Colonic mucosa (tissue), 4 donors: ENCODE measurements at regions of chr19 and their contacts with region 1.

Region 1: DNA sequence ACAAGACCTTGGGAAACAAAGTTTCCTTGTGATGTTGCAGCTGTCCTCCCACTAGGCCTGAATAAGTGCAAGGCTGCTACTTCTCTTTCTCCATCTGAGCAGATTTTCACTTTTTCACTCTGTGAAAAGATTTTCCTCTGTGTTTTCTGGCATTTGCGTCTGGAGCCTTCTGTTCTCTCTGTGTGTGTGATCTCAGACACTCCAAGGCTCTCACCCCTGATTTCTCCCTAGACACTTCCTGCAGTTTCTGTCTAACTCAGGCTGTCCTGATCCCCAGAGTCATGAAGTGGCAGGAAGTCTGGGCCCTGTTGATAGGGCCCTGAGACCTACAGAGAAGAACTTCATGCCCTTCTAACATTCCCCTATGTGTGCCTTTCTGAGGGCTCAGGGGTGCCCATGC is 37.2 kb downstream of the SIGLEC7 start:
- DNase-seq: no peak
- H3K4me3 ChIP-seq: no peak overlapping the region
- H3K27ac ChIP-seq: no peak overlapping the region
- H3K4me1 ChIP-seq: no peaks in the 10 kb centered on the region
- H3K27me3 ChIP-seq: no peaks in the 10 kb centered on the region
- CTCF ChIP-seq: no peak

Region 2: DNA sequence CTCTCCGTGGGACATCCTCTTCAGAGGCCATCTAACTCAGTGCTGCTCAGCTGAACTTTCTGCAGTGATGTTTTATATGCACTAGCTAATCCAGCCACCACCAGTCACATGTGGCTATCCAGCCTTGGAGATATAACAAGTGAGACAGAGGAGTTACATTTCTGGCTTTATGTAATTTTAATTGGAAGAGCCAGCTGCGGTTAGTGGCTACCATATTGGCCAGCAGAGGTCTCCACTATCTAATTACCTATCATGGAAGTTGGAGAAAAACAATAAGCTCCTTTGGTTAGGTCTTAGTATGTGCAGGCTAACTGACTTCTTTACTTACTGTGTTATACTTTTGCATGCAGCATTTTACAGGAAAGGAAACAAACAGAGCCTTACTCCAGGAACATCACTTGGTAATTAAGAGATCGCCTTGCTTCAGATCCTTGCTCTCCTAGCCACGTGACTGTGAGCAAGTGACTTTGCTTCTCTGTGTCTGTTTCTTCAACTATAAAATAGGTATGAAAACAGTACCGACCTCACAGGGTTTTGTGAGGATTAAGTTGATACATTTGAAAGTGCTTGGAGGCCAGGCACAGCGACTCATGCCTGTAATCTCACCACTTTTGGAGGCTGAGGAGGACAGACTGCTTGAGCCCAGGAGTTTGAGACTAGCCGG is 158.1 kb before region 1 on chr19:
- intact Hi-C with region 1: loop called (anchors 10 kb)
- DNase-seq: no peak
- H3K4me3 ChIP-seq: no peak overlapping the region
- H3K27ac ChIP-seq: no peak overlapping the region
- H3K4me1 ChIP-seq: peaks cover 7% of the 10 kb centered on the region
- H3K27me3 ChIP-seq: peaks cover 27% of the 10 kb centered on the region
- CTCF ChIP-seq: peak; percentile 56

Region 3: GRCh38 chr19:51107406-51108065 is 71.7 kb before region 1 on chr19:
- intact Hi-C with region 1: no loop called
- DNase-seq: no peak
- H3K4me3 ChIP-seq: peak overlapping the region; percentile 64
- H3K27ac ChIP-seq: no peak overlapping the region
- H3K4me1 ChIP-seq: peaks cover 6% of the 10 kb centered on the region
- H3K27me3 ChIP-seq: no peaks in the 10 kb centered on the region
- CTCF ChIP-seq: no peak

Region 4: GRCh38 chr19:51119101-51119500 is 60.2 kb before region 1 on chr19:
- intact Hi-C with region 1: no loop called
- DNase-seq: no peak
- H3K4me3 ChIP-seq: no peak overlapping the region
- H3K27ac ChIP-seq: no peak overlapping the region
- H3K4me1 ChIP-seq: no peaks in the 10 kb centered on the region
- H3K27me3 ChIP-seq: no peaks in the 10 kb centered on the region
- CTCF ChIP-seq: no peak

Region 5: GRCh38 chr19:51219307-51219706 is 40.1 kb after region 1 on chr19:
- intact Hi-C with region 1: no loop called
- DNase-seq: no peak
- H3K4me3 ChIP-seq: no peak overlapping the region
- H3K27ac ChIP-seq: no peak overlapping the region
- H3K4me1 ChIP-seq: no peaks in the 10 kb centered on the region
- H3K27me3 ChIP-seq: no peaks in the 10 kb centered on the region
- CTCF ChIP-seq: no peak